Activated CD4-positive, alpha-beta memory T cell treated with anti-CD3 and anti-CD28 coated beads for 36 hours (primary cell): ENCODE measurements at regions of chr6 and their contacts with region 1.

Region 1: GRCh38 chr6:27146706-27147505 is 100.6 kb upstream of the PRSS16 start:
- DNase-seq: peak; percentile 89
- H3K4me3 Mint-ChIP-seq: no peak overlapping the region
- H3K27ac Mint-ChIP-seq: no peak overlapping the region
- H3K4me1 Mint-ChIP-seq: peaks cover 21% of the 10 kb centered on the region
- H3K27me3 Mint-ChIP-seq: no peaks in the 10 kb centered on the region

Region 2: DNA sequence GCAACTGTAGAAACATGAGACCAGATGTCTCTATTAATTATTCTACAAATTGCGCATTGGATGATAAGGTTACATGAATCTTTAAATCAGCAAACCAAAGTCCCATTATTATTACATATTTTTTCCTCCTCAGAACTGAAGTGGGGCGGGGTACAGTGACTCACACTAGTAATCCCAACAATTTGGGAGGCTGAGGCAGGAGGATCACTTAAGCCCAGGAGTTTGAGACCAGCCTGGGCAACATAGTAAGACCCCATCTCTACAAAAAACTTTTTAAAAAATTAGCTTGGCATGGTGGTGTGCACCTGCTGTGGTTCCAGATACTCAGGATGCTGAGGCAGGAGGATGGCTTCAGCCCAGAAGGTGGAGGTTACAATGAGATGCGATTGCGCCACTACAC is 1030.6 kb before region 1 on chr6:
- CTCF ChIA-PET with region 1: no interaction called
- POLR2A ChIA-PET with region 1: no interaction called
- intact Hi-C with region 1: no loop called
- DNase-seq: no peak
- H3K4me3 Mint-ChIP-seq: no peak overlapping the region
- H3K27ac Mint-ChIP-seq: no peak overlapping the region
- H3K4me1 Mint-ChIP-seq: peaks cover 9% of the 10 kb centered on the region
- H3K27me3 Mint-ChIP-seq: no peaks in the 10 kb centered on the region

Region 3: DNA sequence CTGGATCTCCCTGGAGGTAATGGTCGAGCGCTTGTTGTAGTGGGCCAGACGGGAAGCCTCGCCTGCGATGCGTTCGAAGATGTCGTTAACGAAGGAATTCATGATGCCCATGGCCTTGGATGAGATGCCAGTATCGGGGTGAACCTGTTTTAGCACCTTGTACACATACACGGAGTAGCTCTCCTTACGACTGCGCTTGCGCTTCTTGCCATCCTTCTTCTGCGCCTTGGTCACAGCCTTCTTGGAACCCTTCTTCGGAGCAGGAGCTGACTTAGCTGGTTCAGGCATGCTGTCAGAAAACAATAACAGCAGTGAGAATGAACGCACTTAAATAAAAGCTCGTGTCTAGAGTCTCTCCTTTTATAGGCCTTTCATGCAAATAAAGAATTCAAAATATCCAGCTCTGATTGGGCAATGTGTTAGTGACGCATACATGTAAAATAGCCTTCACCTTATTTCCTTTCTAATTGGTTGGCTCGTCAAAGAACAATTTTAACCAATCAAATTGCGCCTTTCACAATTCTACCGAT is 930.5 kb before region 1 on chr6:
- CTCF ChIA-PET with region 1: no interaction called
- POLR2A ChIA-PET with region 1: interaction called, 11 read pairs
- intact Hi-C with region 1: no loop called
- DNase-seq: peak; percentile 89
- H3K4me3 Mint-ChIP-seq: no peak overlapping the region
- H3K27ac Mint-ChIP-seq: no peak overlapping the region
- H3K4me1 Mint-ChIP-seq: peaks cover 5% of the 10 kb centered on the region
- H3K27me3 Mint-ChIP-seq: no peaks in the 10 kb centered on the region

Region 4: GRCh38 chr6:27002447-27002846 is 144.5 kb before region 1 on chr6:
- CTCF ChIA-PET with region 1: no interaction called
- POLR2A ChIA-PET with region 1: no interaction called
- intact Hi-C with region 1: no loop called
- DNase-seq: no peak
- H3K4me3 Mint-ChIP-seq: no peak overlapping the region
- H3K27ac Mint-ChIP-seq: no peak overlapping the region
- H3K4me1 Mint-ChIP-seq: no peaks in the 10 kb centered on the region
- H3K27me3 Mint-ChIP-seq: peaks cover 12% of the 10 kb centered on the region

Region 5: GRCh38 chr6:27157459-27158315 is 10.8 kb after region 1 on chr6:
- CTCF ChIA-PET with region 1: interaction called, 10 read pairs
- POLR2A ChIA-PET with region 1: interaction called, 33 read pairs
- intact Hi-C with region 1: loop called (anchors 1 kb)
- DNase-seq: peak; percentile 91
- H3K4me3 Mint-ChIP-seq: peak overlapping the region; percentile 66
- H3K27ac Mint-ChIP-seq: peak overlapping the region; percentile 77
- H3K4me1 Mint-ChIP-seq: peaks cover 45% of the 10 kb centered on the region
- H3K27me3 Mint-ChIP-seq: no peaks in the 10 kb centered on the region

Region 6: DNA sequence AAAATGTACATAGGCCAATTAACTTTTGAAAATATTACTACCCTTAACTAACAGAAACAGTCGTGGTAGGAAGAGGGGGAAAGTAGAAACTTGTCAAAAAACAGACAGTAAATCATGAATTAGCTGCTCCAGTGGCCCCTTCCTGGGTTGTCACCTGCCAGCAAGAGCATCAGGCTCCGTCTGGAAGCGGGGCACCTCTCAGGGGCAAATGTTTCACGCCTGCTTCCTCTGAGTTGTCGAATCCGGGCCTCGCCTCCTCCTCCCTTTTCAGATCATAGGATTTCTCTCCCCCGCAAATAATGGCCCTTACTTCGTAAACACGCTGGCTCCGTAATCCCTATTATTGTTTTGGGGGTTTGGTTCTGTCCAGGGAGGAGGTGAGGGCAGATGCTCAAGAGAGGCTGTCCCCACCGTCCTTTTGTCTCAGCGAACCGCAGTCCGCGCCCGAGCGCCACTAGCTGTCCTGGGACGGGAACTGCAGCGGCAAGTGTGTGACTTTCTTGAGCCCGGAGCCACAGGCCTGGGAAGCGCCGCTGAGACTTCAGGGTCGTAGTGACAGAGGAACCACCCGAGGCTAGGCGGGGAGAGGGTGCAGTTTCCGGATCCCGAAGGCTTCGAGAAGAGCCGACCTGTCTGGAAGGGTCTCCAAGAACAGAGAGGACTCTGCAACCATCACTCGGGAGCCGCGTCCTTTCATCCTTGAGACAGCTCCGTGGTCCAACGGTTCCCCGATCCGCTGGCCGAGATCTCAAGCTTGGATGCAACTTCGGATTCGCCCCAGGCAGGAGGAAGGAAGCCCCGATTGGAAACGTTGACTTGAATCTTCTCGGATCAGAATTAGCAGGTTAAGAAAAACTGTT is 540.5 kb after region 1 on chr6:
- CTCF ChIA-PET with region 1: no interaction called
- POLR2A ChIA-PET with region 1: no interaction called
- intact Hi-C with region 1: no loop called
- DNase-seq: peak; percentile 90
- H3K4me3 Mint-ChIP-seq: peak overlapping the region; percentile 87
- H3K27ac Mint-ChIP-seq: peak overlapping the region; percentile 84
- H3K4me1 Mint-ChIP-seq: peaks cover 14% of the 10 kb centered on the region
- H3K27me3 Mint-ChIP-seq: peaks cover 15% of the 10 kb centered on the region

Region 7: GRCh38 chr6:27809939-27810767 is 663.2 kb after region 1 on chr6:
- CTCF ChIA-PET with region 1: interaction called, 4 read pairs
- POLR2A ChIA-PET with region 1: interaction called, 64 read pairs
- intact Hi-C with region 1: loop called (anchors 2 kb)
- DNase-seq: peak; percentile 82
- H3K4me3 Mint-ChIP-seq: peak overlapping the region; percentile 85
- H3K27ac Mint-ChIP-seq: peak overlapping the region; percentile 96
- H3K4me1 Mint-ChIP-seq: peaks cover 61% of the 10 kb centered on the region
- H3K27me3 Mint-ChIP-seq: peaks cover 4% of the 10 kb centered on the region

Region 8: GRCh38 chr6:27838058-27838944 is 691.4 kb after region 1 on chr6:
- CTCF ChIA-PET with region 1: no interaction called
- POLR2A ChIA-PET with region 1: interaction called, 32 read pairs
- intact Hi-C with region 1: no loop called
- DNase-seq: peak; percentile 88
- H3K4me3 Mint-ChIP-seq: no peak overlapping the region
- H3K27ac Mint-ChIP-seq: no peak overlapping the region
- H3K4me1 Mint-ChIP-seq: peaks cover 22% of the 10 kb centered on the region
- H3K27me3 Mint-ChIP-seq: peaks cover 6% of the 10 kb centered on the region

Region 9: DNA sequence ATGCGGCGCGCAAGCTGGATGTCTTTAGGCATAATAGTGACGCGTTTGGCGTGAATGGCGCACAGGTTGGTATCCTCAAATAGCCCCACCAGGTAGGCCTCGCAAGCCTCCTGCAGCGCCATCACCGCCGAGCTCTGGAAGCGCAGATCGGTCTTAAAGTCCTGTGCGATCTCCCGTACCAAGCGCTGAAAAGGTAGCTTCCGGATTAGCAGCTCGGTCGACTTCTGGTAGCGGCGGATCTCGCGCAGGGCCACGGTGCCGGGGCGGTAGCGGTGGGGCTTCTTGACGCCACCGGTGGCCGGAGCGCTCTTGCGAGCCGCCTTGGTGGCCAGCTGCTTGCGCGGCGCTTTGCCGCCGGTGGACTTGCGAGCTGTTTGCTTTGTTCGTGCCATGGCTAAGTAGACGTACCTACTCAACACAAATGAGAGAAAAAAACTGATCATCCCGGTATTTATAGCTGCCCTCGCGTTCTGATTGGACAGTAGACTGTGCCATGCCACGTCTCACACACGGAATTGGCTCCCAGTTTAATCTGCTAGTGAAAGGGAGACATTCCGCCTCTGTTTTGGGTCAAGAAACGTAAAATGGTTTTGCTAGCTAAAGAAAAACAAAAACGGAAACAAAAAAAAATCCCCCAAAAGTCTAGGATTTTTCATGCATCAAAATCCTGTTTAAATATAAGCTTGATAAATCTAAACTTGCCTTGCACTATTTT is 725.2 kb after region 1 on chr6:
- CTCF ChIA-PET with region 1: no interaction called
- POLR2A ChIA-PET with region 1: interaction called, 48 read pairs
- intact Hi-C with region 1: loop called (anchors 2 kb)
- DNase-seq: peak; percentile 82
- H3K4me3 Mint-ChIP-seq: peak overlapping the region; percentile 81
- H3K27ac Mint-ChIP-seq: peak overlapping the region; percentile 99
- H3K4me1 Mint-ChIP-seq: peaks cover 30% of the 10 kb centered on the region
- H3K27me3 Mint-ChIP-seq: peaks cover 8% of the 10 kb centered on the region